Sciatic nerve (tissue), 2 donors: ENCODE measurements at regions of chr19 and their contacts with region 1.

Region 1: DNA sequence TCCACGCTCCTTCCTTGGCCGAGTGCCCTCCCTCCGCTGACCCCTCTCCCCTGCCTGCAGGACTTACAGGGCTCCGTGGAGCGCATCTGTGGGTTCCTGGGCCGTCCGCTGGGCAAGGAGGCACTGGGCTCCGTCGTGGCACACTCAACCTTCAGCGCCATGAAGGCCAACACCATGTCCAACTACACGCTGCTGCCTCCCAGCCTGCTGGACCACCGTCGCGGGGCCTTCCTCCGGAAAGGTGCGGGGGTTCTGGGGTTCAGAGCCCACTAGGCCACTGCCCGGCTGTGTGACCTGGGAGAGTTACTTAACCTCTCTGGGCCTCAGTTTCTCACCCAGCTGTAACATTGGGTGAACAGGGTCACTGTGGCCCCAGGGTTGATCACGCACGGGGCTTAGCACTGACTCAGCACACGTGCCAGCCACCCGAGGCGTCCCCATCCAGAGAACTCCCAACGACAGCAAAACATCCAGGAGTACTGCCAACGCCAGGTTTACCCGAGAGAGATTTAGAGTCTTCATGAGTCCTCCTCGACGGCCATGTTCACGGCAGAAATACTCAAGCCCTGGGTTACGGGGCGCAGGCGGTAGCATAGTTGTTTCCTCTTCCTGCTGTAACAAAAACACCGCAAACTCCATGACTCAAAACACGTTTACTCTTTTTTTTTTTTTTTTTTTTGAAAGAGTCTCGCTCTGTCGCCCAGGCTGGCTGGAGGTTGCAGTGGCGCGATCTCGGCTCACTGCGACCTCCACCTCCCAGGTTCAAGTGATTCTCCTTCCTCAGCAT is 9.7 kb upstream of the SPACA4 start:
- DNase-seq: no peak
- ATAC-seq: no peak

Region 2: DNA sequence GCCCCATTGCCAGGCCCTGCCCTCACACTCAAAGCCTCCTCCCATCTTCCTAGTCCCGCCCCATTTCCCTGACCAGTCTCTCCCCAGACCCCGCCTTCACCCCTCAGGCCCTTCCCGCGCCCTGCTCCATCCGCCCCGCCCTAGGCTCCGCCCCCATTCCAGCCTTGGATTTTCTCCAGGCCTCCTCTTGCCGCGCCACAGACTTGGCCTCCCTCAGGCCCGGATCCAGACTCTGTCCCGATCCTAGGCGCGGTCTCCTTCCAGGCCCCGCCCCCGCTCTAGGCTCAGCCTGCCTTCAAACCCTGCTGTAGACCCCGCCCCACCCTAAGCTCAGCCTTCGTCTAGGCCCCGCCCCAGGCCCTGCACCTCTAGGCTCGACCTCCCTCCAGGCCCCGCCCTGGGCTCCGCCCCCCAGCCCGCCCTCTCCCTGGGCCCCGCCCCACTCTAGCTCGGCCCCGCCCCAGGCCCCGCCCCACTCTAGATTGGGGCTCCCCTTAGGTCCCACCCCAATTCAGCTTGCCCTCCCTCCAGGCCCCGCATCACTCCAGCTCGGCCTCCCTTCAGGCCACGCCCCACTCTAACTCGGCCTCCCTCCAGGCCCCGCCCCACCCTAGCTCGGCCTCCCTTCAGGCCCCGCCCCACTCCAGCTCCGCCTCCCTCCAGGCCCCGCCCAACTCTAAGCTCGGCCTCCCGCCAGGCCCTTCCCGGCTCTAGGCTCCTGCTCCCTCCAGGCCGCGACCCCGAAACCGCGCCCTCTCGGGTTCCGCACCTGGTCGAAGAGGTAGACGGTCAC is 103.8 kb before region 1 on chr19:
- intact Hi-C with region 1: loop called (anchors 10 kb)
- DNase-seq: peak; percentile 97
- ATAC-seq: peak; percentile 92